ENCODE measurements at regions of chr20 and their contacts with region 1.

Region 1: DNA sequence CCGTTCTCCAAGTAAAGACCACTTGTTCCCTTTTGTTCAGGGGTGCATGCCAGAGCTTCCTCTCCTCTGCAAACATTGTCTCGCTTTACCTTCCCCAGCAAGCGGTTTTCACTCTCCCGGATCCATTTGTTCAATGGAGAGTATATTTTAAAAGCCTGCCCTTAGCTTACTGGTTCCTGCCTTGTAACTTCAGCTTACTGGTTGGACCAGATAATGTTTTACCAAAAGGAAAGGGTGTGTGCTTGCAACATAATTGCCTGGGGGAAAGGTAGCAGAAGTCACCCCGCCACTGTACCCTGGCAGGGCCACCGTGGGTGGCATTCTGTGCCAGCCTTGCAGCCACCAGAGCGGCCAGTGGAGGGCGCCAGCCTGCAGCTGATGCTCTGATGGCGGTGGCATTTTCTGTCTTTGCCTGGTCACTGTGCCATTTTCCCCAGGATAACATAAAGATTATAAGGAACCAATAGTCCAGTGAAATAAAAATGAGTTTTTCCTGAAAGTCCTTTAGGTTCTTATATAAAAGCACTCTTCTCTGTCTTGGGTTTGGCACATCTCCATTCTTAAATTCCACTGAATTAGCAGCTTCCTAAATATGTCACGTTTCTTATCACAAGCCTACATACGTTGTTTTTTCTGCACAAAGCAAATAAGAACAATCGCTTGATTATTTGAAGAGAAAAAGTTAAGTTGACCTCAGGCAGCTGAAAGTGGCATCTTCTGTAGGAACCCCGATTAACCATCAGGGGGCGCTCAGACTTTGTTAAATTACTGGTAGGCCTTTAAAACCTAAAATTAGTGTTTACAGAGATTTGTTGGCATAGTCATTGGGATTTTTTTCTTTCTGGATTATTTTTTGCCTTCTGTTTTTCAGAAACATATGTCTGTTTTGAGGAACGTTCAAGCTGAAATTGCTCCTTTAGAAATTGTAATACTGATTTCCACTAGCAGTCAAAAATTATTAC is 67.4 kb upstream of the XRN2 start:
- DNase-seq: peak; percentile 46
- H3K4me3 Mint-ChIP-seq: no peak overlapping the region
- H3K27ac Mint-ChIP-seq: no peak overlapping the region
- H3K4me1 Mint-ChIP-seq: peaks cover 5% of the 10 kb centered on the region
- H3K27me3 Mint-ChIP-seq: no peaks in the 10 kb centered on the region

Region 2: GRCh38 chr20:20860078-20860806 is 375.5 kb before region 1 on chr20:
- intact Hi-C with region 1: loop called (anchors 2 kb)
- DNase-seq: peak; percentile 64
- H3K4me3 Mint-ChIP-seq: no peak overlapping the region
- H3K27ac Mint-ChIP-seq: no peak overlapping the region
- H3K4me1 Mint-ChIP-seq: no peaks in the 10 kb centered on the region
- H3K27me3 Mint-ChIP-seq: peaks cover 4% of the 10 kb centered on the region

Region 3: DNA sequence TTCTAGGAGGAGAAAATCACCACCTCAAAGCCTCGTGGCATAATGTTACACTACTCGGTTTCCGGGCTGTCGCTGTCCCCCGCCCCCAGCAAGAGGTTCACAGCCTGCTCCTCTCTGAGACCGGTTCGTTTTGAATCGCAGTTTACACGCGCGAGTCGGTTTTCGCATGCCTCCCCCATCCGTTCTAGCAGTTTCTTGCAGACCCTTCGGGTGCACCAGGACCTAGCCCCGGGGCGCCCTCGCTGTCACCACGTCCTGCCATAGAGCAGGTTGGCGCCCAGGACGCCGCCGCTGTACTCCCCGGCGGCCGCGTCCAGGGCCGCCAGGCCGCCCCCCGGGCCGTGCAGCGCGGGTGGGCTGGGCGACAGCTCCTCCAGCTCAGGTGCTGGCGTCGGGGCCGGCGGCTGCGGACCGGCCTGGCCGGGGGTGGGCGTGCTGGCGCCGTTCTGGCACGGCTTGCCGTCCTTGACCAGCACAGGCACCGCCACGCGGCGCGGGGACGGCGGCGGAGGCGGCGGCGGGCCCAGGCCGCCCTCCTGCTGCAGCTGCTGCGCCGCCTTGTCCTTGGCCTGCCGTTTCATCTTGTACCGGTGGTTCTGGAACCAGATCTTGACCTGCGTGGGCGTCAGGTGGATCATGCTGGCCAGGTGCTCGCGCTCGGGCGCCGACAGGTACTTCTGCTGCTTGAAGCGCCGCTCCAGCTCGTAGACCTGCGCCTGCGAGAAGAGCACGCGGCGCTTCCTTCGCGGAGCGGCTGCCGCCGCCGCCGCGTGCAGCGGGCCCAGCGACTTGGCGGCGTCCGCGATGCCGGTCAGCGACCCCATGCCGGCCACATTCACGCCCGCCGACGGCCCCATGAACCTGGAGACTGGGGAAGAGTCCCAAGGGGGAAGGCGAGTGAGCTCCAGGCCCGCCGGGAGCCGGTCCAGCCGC is 160.2 kb after region 1 on chr20:
- intact Hi-C with region 1: loop called (anchors 2 kb)
- DNase-seq: peak; percentile 43
- H3K4me3 Mint-ChIP-seq: peak overlapping the region; percentile 77
- H3K27ac Mint-ChIP-seq: peak overlapping the region; percentile 73
- H3K4me1 Mint-ChIP-seq: peaks cover 38% of the 10 kb centered on the region
- H3K27me3 Mint-ChIP-seq: peaks cover 77% of the 10 kb centered on the region

Region 4: DNA sequence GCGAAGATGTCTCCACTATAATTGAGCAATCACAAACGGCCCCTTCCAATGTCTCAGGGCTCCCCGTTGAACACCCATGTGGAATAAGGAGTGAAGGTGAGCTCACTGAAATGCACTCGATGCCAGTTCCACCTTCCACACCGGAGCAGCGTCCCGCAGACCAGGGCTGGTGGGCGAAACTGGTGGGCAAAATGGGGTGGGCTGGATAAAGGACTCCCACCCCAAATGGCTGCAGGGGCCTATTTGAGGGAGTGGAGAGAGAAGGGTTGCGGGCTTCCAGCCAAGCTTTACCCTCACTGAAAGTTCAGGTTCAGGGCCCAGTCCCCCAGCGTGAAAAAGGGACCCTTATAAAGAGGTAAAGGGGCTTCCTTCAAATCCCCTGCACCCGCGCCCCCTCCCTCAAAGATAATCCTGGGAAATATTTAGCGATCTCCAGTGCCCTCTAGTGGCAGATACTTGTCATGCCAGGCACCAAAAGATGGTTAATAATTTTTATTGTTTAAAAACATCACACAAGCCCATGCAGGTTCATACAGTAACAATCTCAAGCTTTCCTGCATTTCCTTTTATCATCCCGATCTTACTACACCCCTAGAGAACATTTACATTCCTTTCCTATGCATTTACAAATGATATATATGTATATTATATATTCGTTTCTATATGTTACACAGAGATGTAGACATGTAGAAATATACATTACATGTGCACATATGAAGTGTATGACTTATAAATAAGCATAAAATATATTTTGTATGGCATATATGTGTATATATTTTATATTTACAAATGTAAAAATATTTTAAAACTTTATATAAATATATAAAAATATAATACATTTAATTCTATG is 336.3 kb after region 1 on chr20:
- intact Hi-C with region 1: loop called (anchors 2 kb)
- DNase-seq: no peak
- H3K4me3 Mint-ChIP-seq: no peak overlapping the region
- H3K27ac Mint-ChIP-seq: no peak overlapping the region
- H3K4me1 Mint-ChIP-seq: peaks cover 14% of the 10 kb centered on the region
- H3K27me3 Mint-ChIP-seq: peaks cover 32% of the 10 kb centered on the region